ENCODE measurements at regions of chr1 and their contacts with region 1.

Region 1: DNA sequence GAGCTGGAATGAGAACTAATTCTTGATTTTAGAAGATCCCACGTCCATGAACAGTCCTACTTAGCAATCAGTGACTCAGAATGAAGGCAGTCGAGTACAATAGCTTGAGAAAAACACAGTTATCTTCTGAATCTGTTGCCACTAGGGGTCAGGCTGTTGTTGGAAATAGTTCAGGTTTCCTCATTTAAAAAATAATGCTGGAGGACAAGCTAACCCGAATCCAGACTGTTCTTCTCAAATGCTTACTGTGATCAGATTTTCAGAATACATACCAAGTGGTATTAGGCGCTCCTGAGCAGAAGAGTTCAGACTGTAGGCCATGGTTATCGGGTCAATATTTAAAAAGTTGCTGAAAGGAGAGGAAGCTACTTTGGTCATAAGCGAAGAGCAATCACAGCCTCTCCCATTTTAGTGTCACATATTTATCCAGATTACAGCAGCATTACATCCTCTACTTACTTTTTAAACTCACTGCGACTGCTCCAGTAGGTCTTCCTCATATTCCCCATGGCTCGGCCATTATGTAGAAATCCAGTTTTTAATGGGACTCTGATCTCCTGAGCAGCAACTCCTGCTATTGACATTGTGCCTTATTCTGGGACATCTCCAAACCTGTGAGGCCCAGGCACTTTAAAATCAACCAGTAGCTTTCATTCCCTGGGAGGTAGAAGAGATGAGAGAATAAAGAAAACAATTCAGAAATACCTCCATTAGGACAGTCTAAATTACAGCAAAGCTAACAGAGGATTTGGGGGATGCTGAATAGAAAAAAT is 10.9 kb downstream of the ERRFI1 start:
- H3K4me3 ChIP-seq: no peak overlapping the region
- H3K27ac ChIP-seq: no peak overlapping the region
- H3K4me1 ChIP-seq: peaks cover 44% of the 10 kb centered on the region
- CTCF ChIP-seq: peak; percentile 42; the same call in 1 of the 2 replicates

Region 2: GRCh38 chr1:7983086-7983778 is 32.0 kb before region 1 on chr1:
- CTCF ChIA-PET with region 1: interaction called, 63 read pairs
- POLR2A ChIA-PET with region 1: no interaction called
- H3K4me3 ChIP-seq: no peak overlapping the region
- H3K27ac ChIP-seq: no peak overlapping the region
- H3K4me1 ChIP-seq: no peaks in the 10 kb centered on the region
- CTCF ChIP-seq: no peak

Region 3: DNA sequence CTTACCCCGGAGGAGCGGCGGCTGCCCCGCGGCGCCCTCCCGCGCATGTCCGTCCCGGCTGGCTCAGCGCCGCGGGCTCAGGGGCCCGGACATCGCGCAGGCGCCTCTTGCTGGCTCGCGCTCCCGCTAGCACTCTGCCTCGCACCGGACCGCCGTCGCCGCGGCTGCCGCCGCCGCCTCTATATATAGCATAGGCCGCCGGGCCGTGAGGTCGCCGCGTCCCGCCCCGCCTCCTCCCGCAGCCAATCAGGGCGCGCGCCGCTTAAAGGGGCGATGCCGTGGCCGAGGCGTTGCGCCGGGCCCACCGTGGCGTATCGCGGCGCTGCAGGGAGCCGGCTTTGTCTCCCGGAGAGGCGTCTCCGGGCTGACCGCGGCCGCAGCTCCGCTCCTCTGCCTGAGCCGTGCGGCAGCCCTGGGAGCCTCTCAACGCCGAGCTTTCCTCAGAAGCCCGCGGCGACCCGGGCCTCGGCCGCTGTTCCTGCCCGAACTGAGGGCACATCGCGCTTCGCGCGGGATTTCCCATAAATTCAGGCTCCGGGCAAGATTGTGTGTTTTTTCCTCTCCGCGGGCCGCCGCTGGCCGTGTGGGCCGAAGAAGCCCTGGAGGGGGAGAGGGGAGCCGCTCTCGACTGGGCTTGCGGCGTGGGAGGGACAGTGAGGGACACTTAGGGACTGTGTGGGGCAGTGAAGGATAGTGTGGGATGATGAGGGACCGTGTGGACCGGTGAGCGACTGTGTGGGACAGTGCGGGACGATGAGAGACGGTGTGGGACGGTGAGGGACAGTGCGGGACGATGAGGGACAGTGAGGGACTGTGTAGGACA is 11.1 kb after region 1 on chr1 and contains the start of gene ERRFI1:
- CTCF ChIA-PET with region 1: interaction called, 30 read pairs
- POLR2A ChIA-PET with region 1: interaction called, 14 read pairs
- H3K4me3 ChIP-seq: peak within 1 kb of the TSS; percentile 85
- H3K27ac ChIP-seq: peak within 1 kb of the TSS; percentile 67
- H3K4me1 ChIP-seq: peaks cover 27% of the 10 kb centered on the region
- CTCF ChIP-seq: peak; percentile 6; the same call in 1 of the 2 replicates

Region 4: DNA sequence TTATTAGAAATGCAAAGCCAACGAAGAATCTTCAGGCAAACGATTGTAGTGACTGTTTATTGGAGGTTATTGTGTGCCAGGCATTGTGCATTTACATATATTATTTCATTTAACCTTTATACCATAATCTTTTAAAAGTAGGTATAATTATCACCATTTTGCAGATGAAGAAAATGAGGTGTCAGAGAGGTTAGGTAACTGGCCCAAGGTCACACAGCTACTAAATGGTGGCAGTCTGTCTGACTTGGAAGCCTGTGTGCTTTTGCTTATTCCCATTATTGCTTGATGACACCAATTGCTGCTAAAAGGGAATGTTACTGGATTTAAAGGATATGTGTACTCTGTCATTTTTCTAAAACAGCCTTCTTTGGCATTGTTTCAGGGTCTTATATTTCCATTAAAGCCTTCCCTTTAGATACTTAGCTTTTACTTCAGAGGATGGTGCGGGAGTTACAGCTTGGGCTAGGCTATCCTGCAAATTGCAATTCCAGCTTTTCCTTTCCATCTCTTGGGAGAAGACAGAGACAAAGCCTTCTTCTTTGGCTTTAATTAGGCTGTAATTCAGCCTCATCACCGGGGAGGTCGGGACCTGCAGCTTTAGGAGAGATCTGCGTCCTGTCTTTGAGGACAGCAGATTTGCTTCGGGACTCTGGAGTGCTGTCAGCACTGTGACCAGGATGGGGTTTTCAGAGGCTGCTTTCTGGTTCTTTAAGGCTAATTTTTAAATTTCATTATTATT is 48.2 kb after region 1 on chr1:
- CTCF ChIA-PET with region 1: no interaction called
- POLR2A ChIA-PET with region 1: no interaction called
- H3K4me3 ChIP-seq: no peak overlapping the region
- H3K27ac ChIP-seq: no peak overlapping the region
- H3K4me1 ChIP-seq: no peaks in the 10 kb centered on the region
- CTCF ChIP-seq: no peak

Region 5: GRCh38 chr1:8238851-8239305 is 223.7 kb after region 1 on chr1:
- CTCF ChIA-PET with region 1: interaction called, 21 read pairs
- POLR2A ChIA-PET with region 1: no interaction called
- H3K4me3 ChIP-seq: no peak overlapping the region
- H3K27ac ChIP-seq: no peak overlapping the region
- H3K4me1 ChIP-seq: no peaks in the 10 kb centered on the region
- CTCF ChIP-seq: 0 out of 2 replicates have a peak, but pooled peaks have one; percentile 20

Region 6: DNA sequence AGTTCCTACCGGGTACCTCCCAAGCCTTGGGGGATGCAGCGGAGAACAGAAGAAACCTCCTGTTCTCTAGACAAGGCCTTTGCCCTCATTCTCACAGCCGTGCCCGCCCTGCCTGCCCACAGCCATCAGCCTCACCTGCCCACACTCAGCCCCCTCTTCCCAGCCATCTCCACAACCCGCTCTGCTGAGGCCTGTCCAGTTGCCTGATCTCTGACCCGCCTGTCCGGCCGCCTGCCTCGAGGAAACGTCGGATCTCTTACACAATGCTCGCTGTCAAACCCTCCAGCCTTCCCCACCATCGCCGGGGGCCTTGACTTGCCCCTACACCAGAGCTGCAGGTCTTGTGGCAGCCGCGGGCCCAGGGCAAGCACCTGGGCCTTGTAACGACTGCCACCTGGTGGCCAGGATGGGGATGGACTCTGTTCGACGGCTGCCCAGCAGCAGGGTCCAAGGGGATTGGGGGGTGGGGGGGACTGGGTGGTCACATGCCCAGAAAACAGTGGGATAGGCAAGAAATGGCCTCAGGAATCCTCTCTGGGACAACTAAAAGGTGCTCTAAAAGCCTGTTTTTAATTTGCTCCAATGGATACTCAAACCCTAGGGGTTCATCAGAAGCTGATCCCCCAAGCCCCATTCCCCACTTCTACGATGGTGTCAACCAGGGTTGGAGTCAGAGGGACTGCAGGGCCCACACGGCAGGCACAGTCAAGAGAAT is 333.7 kb after region 1 on chr1:
- CTCF ChIA-PET with region 1: interaction called, 17 read pairs
- POLR2A ChIA-PET with region 1: no interaction called
- H3K4me3 ChIP-seq: no peak overlapping the region
- H3K27ac ChIP-seq: no peak overlapping the region
- H3K4me1 ChIP-seq: no peaks in the 10 kb centered on the region; the same call in 1 of the 2 replicates
- CTCF ChIP-seq: peak; percentile 72

Region 7: GRCh38 chr1:8510041-8510823 is 495.0 kb after region 1 on chr1:
- CTCF ChIA-PET with region 1: no interaction called
- POLR2A ChIA-PET with region 1: no interaction called
- H3K4me3 ChIP-seq: no peak overlapping the region
- H3K27ac ChIP-seq: no peak overlapping the region
- H3K4me1 ChIP-seq: no peaks in the 10 kb centered on the region
- CTCF ChIP-seq: no peak

Measured in HEK293 (cell line).